ENCODE measurements at regions of chr6 and their contacts with region 1.

Region 1: GRCh38 chr6:36765594-36766398 is 68.2 kb downstream of the RAB44 start:
- DNase-seq: peak; percentile 87
- CTCF ChIP-seq: peak; percentile 98

Region 2: GRCh38 chr6:36526066-36526465 is 239.7 kb before region 1 on chr6:
- in situ Hi-C with region 1: no loop called
- DNase-seq: no peak
- CTCF ChIP-seq: no peak

Region 3: GRCh38 chr6:37018198-37019064 is 252.6 kb after region 1 on chr6:
- in situ Hi-C with region 1: loop called (anchors 10 kb)
- DNase-seq: peak; percentile 91
- CTCF ChIP-seq: peak; percentile 93

Region 4: DNA sequence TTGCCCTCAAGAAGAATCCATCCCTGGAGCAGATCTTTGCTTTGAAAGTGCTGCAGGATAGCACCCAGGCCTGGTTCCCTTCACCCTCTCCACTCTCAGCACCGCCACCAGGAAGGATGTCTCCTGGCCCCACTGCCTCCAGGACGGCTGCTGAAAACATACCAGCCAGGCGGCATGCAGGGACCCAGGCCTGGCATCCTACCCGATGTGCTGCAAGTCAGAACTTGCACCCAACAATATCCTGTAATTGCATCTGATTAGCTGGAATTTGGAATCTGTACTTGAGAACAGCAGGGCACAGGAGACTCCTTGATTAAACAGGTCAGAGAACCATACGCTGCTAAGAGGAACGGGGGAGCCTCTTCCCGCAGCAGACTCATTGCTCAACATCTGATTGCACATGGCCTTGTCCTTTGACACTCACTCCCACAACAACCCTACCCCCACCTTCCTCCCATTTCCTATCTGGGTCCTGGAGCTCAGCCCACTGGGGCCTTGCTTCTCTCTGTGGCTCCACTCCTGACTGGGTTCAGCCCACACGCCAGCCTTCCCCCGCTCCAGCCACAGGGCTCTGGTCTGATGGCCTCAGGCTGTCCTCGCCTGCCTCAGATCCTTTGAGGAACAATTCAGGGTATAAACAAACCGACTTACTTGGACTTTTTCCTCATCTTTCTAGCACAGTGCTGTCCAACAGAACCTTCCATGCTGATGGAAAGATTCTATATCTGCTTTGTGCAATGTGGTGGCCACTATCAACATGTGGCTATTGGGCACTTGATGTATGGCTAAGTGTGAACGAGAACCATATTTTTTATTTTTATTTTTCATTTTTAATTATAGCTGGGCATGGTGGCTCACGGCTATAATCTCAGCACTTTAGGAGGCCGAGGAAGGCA is 317.7 kb after region 1 on chr6:
- in situ Hi-C with region 1: no loop called
- DNase-seq: no peak
- CTCF ChIP-seq: no peak

Region 5: GRCh38 chr6:37222125-37222967 is 456.6 kb after region 1 on chr6:
- in situ Hi-C with region 1: loop called (anchors 25 kb)
- DNase-seq: peak; percentile 88
- CTCF ChIP-seq: no peak

Measured in GM13977 (cell line).